ENCODE measurements at regions of chr2 and their contacts with region 1.

Region 1: DNA sequence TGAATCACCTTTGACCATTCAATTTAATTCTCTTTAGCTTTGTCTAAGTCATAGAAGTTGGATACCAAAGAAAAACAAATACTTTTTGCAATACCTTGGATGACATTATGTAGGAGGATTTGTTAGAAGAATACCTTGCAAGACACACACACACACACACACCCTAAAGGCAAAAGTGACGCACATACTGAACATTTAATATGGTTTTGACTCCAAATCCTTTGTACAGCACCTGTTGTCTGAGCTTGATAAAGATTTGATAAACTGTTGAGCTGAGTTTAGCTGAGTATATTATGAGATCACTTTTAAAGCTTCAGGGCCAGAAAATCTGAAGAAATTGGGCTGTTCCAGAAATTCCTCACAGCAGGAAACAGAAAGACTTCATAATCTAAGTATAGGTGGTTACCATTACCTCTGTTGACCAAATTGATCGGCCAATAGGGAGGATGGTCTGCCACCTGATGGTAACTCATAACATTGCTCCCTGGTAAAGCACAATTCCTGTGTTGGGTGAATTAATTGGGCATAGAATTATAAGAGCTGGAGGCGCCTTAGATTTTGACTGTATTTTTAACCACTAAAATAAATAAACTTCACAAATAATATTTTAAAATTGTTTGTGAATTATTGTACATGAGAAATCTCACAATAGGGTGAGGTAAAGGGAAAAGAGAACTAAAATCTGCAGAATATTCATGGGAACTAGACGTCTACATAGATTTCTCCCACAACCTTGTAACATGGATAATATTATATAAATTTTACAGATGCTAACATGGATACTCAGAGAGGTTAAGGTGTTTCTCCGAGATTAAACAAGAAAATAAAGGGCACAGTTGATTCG is 21.9 kb upstream of the RPIA start:
- DNase-seq: peak; percentile 76

Region 2: GRCh38 chr2:88590998-88591613 is 78.5 kb before region 1 on chr2:
- in situ Hi-C with region 1: loop called (anchors 10 kb)
- DNase-seq: peak; percentile 83